ENCODE measurements at regions of chr12 and their contacts with region 1.

Region 1: GRCh38 chr12:25583545-25583944 is 30.5 kb upstream of the LMNTD1 start:
- DNase-seq: peak; percentile 10
- ATAC-seq: peak; percentile 59; the same call in 1 of the 2 replicates
- H3K4me3 ChIP-seq: no peak overlapping the region
- H3K27ac ChIP-seq: no peak overlapping the region
- H3K4me1 ChIP-seq: no peaks in the 10 kb centered on the region
- H3K27me3 ChIP-seq: no peaks in the 10 kb centered on the region
- CTCF ChIP-seq: peak; percentile 19 to 31 (median 24); a peak in 1 of 6 replicates
- POLR2A ChIP-seq: no peak
- RAD21 ChIP-seq: peak; percentile 67

Region 2: DNA sequence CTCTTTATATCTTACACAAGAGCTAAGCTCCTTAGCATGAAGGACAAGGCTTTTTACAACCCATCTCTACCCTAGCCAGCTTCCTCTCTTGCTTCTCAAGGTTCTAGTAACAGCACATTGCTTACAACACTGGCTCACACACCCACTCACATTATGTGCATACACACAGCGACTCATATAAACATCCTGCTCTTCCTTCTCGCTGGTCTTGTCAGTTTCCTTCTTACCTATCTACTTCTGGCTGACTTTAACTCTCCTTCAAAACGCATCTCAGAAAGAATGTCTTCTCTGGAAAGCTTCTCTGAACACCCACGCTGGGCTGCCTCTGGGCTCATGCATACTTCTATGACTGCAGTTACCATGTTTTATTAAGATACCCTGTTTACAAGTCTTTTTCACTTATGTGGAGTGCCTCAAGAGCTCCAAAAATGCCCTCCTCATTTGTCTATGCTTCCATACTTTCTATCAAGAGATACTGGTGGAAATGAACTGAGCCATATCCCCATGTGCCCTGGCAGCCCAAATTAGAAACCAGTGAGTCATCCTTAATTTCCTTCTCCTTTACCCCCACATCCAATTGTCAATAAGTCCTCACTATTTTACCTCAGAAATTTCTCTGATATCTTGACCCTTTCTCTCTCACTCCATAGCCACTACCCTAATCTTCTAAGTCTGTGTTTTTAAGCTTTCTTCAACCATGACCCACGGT is 205.9 kb before region 1 on chr12:
- CTCF ChIA-PET with region 1: no interaction called
- POLR2A ChIA-PET with region 1: no interaction called
- RAD21 ChIA-PET with region 1: no interaction called
- intact Hi-C with region 1: no loop called
- DNase-seq: no peak
- ATAC-seq: peak; percentile 52; the same call in 1 of the 2 replicates
- H3K4me3 ChIP-seq: no peak overlapping the region
- H3K27ac ChIP-seq: no peak overlapping the region
- H3K4me1 ChIP-seq: peaks cover 0 to 15% of the 10 kb centered on the region in 2 experiments; a peak in 2 of 4 replicates
- H3K27me3 ChIP-seq: no peaks in the 10 kb centered on the region
- CTCF ChIP-seq: no peak
- POLR2A ChIP-seq: no peak
- RAD21 ChIP-seq: no peak

Region 3: GRCh38 chr12:26017484-26018206 is 434.1 kb after region 1 on chr12:
- CTCF ChIA-PET with region 1: no interaction called
- POLR2A ChIA-PET with region 1: no interaction called
- RAD21 ChIA-PET with region 1: no interaction called
- intact Hi-C with region 1: loop called (anchors 10 kb)
- DNase-seq: peak; percentile 27
- ATAC-seq: peak; percentile 63
- H3K4me3 ChIP-seq: no peak overlapping the region
- H3K27ac ChIP-seq: no peak overlapping the region
- H3K4me1 ChIP-seq: peaks cover 0 to 5% of the 10 kb centered on the region in 2 experiments; a peak in 1 of 4 replicates
- H3K27me3 ChIP-seq: no peaks in the 10 kb centered on the region
- CTCF ChIP-seq: peak; percentile 42 to 84 (median 79); a peak in 5 of 6 replicates
- POLR2A ChIP-seq: no peak
- RAD21 ChIP-seq: peak; percentile 75

Measured in HCT116 (cell line).